Activated CD8-positive, alpha-beta memory T cell treated with anti-CD3 and anti-CD28 coated beads, Interleukin-2, amount 10 ng/mL, durations not matched to agents 7 days and 5 days (primary cell): ENCODE measurements at regions of chr2 and their contacts with region 1.

Region 1: GRCh38 chr2:25558262-25558661 is 115.1 kb downstream of the DTNB start:
- DNase-seq: peak; percentile 80
- ATAC-seq: peak; percentile 98
- H3K4me3 Mint-ChIP-seq: peak overlapping the region; percentile 27
- H3K27ac Mint-ChIP-seq: peak overlapping the region; percentile 98
- H3K4me1 Mint-ChIP-seq: peaks cover 57% of the 10 kb centered on the region
- H3K27me3 Mint-ChIP-seq: no peaks in the 10 kb centered on the region

Region 2: DNA sequence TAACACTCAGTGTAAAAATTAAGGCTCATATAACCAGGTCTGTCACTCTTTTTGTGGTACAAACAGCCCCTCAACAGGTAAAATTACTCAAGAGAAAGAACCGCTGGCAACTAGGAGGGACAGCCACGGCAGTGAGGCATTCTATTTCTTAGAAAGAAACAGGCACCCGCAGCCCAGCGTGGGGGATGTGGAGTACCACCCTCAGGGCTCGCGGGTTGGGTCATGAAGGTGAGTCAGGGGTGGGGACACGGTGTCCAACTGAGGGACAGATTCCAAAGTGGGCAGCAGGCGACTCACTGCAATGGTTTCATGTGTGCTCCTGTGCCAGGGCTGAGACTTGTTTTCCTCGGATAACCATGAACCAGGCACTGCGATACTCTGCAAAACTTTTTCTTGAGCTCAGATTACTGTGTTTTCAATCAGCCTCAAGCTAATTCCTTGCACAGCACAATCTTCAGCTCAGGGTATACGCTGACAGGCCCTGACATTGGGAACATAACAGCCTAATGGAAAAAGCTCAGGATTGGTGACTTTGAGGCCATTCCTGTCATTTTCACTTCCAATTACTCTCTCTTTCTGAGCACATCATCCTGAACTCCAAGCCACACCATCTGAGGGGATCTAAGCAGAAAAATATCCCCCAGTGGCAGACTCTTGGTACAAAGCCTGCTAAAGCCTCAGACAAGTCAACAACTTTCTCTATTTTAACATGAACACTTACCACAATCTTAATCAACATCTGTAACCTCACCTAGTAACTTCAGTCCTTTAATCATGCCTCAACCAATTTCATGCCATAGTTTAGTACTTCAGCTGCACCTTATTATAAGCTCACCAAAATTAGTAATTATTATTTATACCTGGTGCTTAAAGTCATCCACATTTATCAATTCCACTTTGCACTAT is 14.1 kb before region 1 on chr2:
- CTCF ChIA-PET with region 1: interaction called, 12 read pairs
- DNase-seq: peak; percentile 56
- ATAC-seq: peak; percentile 53
- H3K4me3 Mint-ChIP-seq: no peak overlapping the region
- H3K27ac Mint-ChIP-seq: peak overlapping the region; percentile 56
- H3K4me1 Mint-ChIP-seq: peaks cover 24% of the 10 kb centered on the region
- H3K27me3 Mint-ChIP-seq: no peaks in the 10 kb centered on the region

Region 3: GRCh38 chr2:25623361-25623760 is 65.1 kb after region 1 on chr2:
- CTCF ChIA-PET with region 1: no interaction called
- DNase-seq: no peak
- ATAC-seq: no peak
- H3K4me3 Mint-ChIP-seq: no peak overlapping the region
- H3K27ac Mint-ChIP-seq: no peak overlapping the region
- H3K4me1 Mint-ChIP-seq: no peaks in the 10 kb centered on the region
- H3K27me3 Mint-ChIP-seq: no peaks in the 10 kb centered on the region